Left lung (tissue), 14 donors: ENCODE measurements at regions of chr11 and their contacts with region 1.

Region 1: GRCh38 chr11:75445315-75445953 is 12.4 kb upstream of the KLHL35 start:
- DNase-seq: peak in 3 of 4 donors; percentile 57 to 82 (median 73)
- ATAC-seq: peak; percentile 86
- H3K4me3 ChIP-seq: no peak overlapping the region
- H3K27ac ChIP-seq: no peak overlapping the region
- H3K4me1 ChIP-seq: no peaks in the 10 kb centered on the region
- H3K27me3 ChIP-seq: no peaks in the 10 kb centered on the region
- CTCF ChIP-seq: peak; percentile 93 to 94

Region 2: DNA sequence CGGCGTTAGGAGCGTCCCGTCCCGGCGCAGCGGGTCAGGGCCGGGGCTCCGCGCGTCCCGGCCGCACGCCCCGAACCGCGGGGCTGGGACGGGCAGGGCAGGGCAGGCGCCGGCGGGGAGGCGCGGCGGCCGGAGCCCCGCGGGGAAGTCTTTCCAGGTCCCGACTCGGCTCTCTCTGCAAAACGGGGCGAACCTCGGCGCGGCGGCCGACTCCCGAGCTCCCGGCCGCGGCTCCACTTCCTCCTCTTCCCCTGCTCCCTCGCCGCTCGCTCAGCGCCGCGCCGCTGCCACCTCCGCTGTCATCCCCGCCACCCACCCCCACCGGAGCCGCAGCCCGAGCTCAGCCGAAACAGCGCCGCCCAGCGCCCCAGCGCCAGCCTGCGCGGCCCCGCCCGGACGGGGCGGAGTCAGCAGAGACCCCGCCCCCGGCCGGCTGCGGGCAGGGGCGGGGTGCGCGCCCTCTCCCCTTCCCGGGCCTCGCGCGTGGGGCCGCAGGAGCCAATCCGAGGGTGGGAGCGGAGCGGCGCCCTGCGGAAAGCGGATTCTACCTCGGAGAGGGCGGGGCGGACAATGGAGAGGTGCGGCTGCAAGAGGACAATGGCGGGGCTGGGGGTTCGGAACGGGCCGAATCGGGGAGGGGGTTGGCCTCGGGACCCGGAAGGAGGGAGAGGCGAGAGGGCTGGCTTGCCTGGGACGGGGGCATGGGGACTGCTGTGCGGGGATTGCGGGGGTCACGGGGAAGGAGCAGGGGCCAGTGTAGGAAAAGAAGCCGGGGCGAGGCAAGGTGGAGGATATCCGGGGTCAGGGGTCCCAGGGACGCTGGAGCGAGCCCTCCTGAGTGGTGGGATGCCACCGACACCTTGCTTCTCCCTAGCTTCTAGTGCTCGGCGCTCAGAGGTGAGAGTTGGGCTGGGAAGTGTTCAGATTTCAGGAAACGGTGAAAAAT is 80.4 kb after region 1 on chr11 and contains the start of gene GDPD5:
- intact Hi-C with region 1: loop called (anchors 5 kb)
- DNase-seq: peak; percentile 86 to 94 (median 90)
- ATAC-seq: peak; percentile 99
- H3K4me3 ChIP-seq: peak within 1 kb of the TSS; percentile 48 to 63
- H3K27ac ChIP-seq: peak within 1 kb of the TSS in 1 of 2 donors; percentile 8
- H3K4me1 ChIP-seq: peaks cover 11 to 24% of the 10 kb centered on the region in 2 donors
- H3K27me3 ChIP-seq: peaks cover 0 to 30% of the 10 kb centered on the region in 2 donors
- CTCF ChIP-seq: peak; percentile 28 to 53
- polyA plus RNA-seq, gene GDPD5: 24.0 to 34.8 (median 28.4) TPM

Region 3: DNA sequence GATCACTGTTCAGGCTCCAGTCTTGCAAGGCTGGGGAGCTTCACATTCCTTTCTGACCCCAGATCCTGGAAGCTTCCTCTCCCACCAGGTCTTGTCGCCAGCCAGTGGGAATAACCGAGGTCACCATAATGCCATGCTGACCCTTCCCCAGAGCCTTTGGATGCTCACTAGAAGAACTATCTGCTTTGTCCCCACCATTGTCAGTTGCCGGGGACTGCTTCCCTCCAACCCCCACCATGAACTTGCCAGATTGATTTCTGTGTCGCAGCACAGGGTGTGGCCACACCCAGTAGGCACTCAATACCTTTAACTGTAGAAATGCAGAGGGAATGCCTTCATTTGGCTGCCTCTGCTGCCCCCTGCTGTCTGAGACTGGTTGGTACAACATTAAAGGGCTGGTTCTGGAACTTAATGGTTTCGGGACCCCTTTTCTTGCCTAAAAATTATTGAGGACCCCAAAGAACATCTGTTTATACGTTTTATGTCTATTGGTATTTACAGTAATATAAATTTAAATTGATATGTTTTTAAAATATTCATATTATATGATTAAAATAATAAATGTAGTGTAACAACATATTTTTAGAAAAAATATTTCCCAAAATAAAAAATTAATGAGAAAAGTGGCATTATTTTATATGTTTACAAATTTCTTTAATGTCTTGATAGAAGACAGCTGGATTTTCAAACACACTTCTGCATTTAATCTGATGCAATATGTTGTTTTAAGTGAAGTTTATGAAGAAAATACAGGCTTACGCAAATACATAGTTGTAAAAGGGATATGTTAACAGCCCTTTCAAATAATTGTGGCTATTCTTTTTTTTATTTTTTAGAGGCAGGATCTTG is 87.0 kb after region 1 on chr11:
- intact Hi-C with region 1: loop called (anchors 5 kb)
- DNase-seq: peak; percentile 53 to 81 (median 74)
- ATAC-seq: peak; percentile 95
- H3K4me3 ChIP-seq: no peak overlapping the region
- H3K27ac ChIP-seq: no peak overlapping the region
- H3K4me1 ChIP-seq: no peaks in the 10 kb centered on the region
- H3K27me3 ChIP-seq: no peaks in the 10 kb centered on the region
- CTCF ChIP-seq: peak; percentile 79 to 80

Region 4: DNA sequence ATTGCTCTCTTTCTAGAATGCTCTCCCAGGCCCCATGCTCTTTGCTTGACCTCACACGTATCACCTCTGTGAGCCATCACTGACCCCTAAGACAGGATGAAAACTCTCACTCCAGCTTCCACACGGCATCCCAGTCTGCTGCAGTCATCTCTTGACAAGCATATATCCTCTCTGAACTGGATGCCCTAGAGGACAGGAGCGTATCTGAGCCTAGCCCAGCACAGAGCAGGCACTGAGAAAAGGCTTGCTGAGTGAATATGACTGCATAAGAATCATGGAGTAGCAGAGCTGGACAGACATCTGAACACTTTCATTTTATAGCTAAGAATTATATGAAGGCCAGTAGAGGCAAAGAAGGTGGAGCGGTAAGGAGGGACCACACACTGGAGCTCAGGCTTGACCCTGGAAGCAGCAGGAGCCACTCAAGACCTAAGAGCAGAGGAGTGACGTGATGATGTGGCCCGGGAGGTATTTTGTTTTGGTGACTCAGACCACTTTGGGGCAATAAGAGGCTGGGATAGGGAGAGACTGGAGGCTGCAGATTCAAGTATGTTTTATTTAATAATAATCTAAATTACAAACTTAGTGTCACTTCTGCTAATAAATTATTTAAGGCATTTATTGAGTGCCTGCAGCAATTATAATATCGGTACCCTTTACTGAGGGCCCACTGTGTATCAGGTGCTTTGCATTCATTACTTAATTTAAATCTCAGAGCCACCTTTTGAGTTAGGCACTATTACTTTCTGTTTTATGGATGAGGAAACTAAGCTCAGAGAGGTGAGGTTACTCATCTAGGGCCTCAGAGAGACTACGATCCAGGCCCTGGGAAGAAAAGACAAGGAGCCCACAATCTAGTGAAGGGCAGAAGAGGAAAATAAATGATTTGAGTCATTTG is 180.8 kb after region 1 on chr11:
- intact Hi-C with region 1: no loop called
- DNase-seq: peak in 1 of 4 donors; percentile 62
- ATAC-seq: peak; percentile 92
- H3K4me3 ChIP-seq: no peak overlapping the region
- H3K27ac ChIP-seq: peak overlapping the region; percentile 48 to 55
- H3K4me1 ChIP-seq: no peaks in the 10 kb centered on the region
- H3K27me3 ChIP-seq: no peaks in the 10 kb centered on the region
- CTCF ChIP-seq: no peak